ENCODE measurements at regions of chr18 and their contacts with region 1.

Region 1: DNA sequence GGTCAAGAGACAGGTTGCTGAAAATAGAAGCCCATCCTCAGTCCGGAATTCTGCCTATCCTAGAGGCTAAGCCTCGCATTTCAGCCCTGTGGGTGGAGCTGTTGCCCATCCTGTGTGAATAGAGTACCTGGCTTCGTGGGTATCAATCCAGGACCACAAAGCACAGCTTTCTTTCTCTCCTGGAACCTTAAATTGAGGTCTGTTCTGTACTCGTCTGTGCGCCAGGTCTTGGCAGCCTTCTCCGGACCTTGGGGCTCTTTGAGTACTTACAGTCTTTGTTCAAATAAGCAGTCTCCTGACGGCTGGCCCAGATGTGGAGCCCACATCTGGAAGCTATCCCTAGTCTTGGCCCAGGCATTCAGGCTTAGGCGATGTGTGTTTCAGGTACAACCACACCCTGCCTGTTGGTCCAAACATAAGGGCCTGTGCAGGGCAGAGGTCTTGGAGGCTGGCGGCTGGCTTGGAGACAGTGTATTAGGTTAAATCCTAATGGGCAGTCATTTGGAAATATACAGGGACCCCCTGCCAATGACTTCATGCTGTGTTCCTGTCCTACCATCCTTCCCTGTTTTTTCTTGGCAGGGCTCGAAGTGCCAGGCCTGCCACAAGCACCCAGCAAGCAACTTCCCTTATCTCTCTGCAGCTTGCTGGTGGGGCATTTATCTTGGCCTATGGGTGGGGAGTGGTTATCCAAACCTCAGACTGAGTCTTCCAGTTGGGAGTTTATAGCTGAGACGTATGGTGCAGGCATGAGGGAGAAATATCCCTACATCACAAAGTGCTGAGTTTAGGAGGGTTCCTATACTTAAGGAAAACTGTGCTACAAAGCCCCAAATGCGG is 294.1 kb downstream of the BCL2 start:
- DNase-seq: no peak
- H3K4me3 ChIP-seq: no peak overlapping the region
- H3K27ac ChIP-seq: no peak overlapping the region
- H3K4me1 ChIP-seq: peaks cover 0 to 3% (median 0%) of the 10 kb centered on the region in 4 donors
- H3K27me3 ChIP-seq: peaks cover 0 to 5% of the 10 kb centered on the region in 2 donors
- CTCF ChIP-seq: peak in 1 of 2 experiments; percentile 5

Region 2: GRCh38 chr18:62209046-62209445 is 816.4 kb before region 1 on chr18:
- intact Hi-C with region 1: no loop called
- DNase-seq: no peak
- H3K4me3 ChIP-seq: no peak overlapping the region
- H3K27ac ChIP-seq: no peak overlapping the region
- H3K4me1 ChIP-seq: no peaks in the 10 kb centered on the region
- H3K27me3 ChIP-seq: no peaks in the 10 kb centered on the region
- CTCF ChIP-seq: no peak

Region 3: GRCh38 chr18:62954366-62954765 is 71.1 kb before region 1 on chr18:
- intact Hi-C with region 1: no loop called
- DNase-seq: no peak
- H3K4me3 ChIP-seq: no peak overlapping the region
- H3K27ac ChIP-seq: no peak overlapping the region
- H3K4me1 ChIP-seq: peaks cover 0 to 3% (median 0%) of the 10 kb centered on the region in 4 donors
- H3K27me3 ChIP-seq: no peaks in the 10 kb centered on the region
- CTCF ChIP-seq: no peak

Region 4: DNA sequence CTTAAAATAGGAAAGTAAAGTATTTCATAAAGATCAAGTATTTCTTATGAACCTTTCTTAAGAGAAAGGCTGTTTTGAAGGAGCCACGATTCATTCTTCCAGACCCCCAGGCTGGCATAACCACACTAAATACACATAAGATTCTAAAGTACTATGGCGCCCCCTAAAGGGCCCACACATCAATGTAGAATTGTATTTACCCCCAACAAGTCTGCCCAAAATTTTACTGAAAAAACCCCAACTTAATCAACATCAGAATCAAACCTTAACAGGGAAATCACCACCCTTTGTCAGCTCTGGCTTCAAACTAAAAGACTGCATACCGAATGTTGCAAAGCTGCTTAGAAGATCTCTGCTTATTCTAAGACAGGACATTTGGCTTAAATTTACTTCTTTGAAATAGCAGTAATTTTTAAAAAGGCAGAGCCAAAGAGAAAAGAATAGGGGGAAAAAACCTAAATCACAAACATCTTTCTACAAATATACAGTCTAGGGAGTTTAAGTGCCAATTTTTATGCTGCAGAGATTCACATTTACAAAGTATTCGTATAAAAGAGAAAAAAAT is 314.5 kb after region 1 on chr18:
- intact Hi-C with region 1: loop called (anchors 10 kb)
- DNase-seq: no peak
- H3K4me3 ChIP-seq: no peak overlapping the region
- H3K27ac ChIP-seq: no peak overlapping the region
- H3K4me1 ChIP-seq: peaks cover 0 to 10% (median 3%) of the 10 kb centered on the region in 4 donors
- H3K27me3 ChIP-seq: no peaks in the 10 kb centered on the region
- CTCF ChIP-seq: peak; percentile 12 to 43